HCT116 (cell line): ENCODE measurements at regions of chr11 and their contacts with region 1.

Region 1: GRCh38 chr11:73931039-73931645 is 19.7 kb upstream of the DNAJB13 start:
- DNase-seq: peak; percentile 79
- ATAC-seq: peak; percentile 100
- H3K4me3 ChIP-seq: no peak overlapping the region
- H3K27ac ChIP-seq: no peak overlapping the region
- H3K4me1 ChIP-seq: peaks cover 3% of the 10 kb centered on the region in 2 experiments; a peak in 3 of 4 replicates
- H3K27me3 ChIP-seq: no peaks in the 10 kb centered on the region
- CTCF ChIP-seq: peak; percentile 49 to 74 (median 60); a peak in 5 of 6 replicates
- POLR2A ChIP-seq: no peak
- RAD21 ChIP-seq: peak; percentile 93

Region 2: DNA sequence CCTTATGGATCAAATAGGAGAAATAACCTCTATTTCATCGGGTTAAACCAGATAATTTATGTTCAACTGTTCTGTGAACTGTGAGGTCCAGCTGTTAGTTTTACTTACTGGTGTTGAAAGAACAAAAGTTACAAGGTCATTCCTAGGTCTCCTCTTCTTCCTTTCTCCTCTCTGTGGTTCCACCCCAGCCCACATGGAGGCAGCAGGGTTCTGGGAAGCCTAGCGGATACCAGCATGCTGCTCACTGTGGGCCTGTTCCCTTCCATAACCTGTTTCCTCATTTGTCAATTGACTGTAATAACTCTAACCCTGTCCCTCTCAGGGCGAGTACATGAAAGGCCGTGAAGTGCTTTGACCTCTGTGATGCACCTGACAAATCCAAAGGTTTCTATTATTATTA is 527.1 kb before region 1 on chr11:
- CTCF ChIA-PET with region 1: interaction called, 6 read pairs
- POLR2A ChIA-PET with region 1: no interaction called
- RAD21 ChIA-PET with region 1: no interaction called
- intact Hi-C with region 1: loop called (anchors 2 kb)
- DNase-seq: peak; percentile 28
- ATAC-seq: peak; percentile 85
- H3K4me3 ChIP-seq: no peak overlapping the region
- H3K27ac ChIP-seq: no peak overlapping the region
- H3K4me1 ChIP-seq: no peaks in the 10 kb centered on the region
- H3K27me3 ChIP-seq: no peaks in the 10 kb centered on the region
- CTCF ChIP-seq: peak; percentile 63 to 76 (median 70)
- POLR2A ChIP-seq: no peak
- RAD21 ChIP-seq: peak; percentile 78

Region 3: GRCh38 chr11:73625696-73626318 is 305.3 kb before region 1 on chr11:
- CTCF ChIA-PET with region 1: interaction called, 49 read pairs
- POLR2A ChIA-PET with region 1: no interaction called
- RAD21 ChIA-PET with region 1: interaction called, 7 to 8 read pairs
- intact Hi-C with region 1: loop called (anchors 1 kb)
- DNase-seq: peak; percentile 56
- ATAC-seq: peak; percentile 96
- H3K4me3 ChIP-seq: no peak overlapping the region
- H3K27ac ChIP-seq: no peak overlapping the region
- H3K4me1 ChIP-seq: peaks cover 0 to 4% of the 10 kb centered on the region in 2 experiments; a peak in 1 of 4 replicates
- H3K27me3 ChIP-seq: peaks cover 9% of the 10 kb centered on the region; the same call in 1 of the 2 replicates
- CTCF ChIP-seq: peak; percentile 79 to 95 (median 93)
- POLR2A ChIP-seq: no peak
- RAD21 ChIP-seq: peak; percentile 92

Region 4: DNA sequence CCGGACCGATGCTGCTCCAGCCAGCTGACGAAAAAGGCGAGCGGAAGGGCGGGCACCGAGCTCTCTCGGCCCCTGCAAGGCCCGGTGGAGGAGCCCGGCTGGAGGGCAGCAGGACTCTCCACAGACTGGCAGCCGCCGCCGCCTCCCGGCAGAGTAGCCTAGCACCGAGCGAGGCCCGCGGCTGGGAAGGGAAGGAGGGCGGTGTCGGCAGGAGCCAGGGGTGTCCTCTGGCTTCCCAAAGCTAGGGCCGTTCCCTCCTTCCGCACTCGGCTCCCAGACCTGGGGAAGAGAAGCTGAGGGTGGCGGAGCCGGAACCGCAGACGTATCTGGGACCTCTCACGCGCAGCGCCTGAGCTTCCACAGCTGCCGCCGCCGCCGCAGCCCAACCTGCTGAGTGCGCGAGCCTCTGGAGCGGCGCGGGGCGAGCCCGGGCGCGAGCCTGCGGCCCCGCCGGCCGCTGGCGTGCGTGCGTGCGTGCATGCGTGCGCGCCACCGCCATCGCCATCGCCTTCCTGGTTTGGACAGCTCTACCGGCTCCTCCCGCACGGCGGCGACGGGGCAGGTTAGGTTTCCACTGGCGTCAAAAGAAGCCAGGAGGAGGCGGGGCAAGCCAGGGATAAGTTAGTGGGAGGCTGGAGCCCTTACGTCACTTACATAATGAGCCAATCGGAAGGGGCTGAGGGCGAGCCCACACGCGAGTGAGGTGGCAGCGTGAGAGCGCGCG is 170.3 kb before region 1 on chr11 and contains the start of gene RAB6A:
- CTCF ChIA-PET with region 1: interaction called, 7 read pairs
- POLR2A ChIA-PET with region 1: no interaction called
- RAD21 ChIA-PET with region 1: interaction called in 1 of 2 experiments, 3 read pairs
- intact Hi-C with region 1: loop called (anchors 1 kb)
- DNase-seq: peak; percentile 99
- ATAC-seq: peak; percentile 90
- H3K4me3 ChIP-seq: peak within 1 kb of the TSS; percentile 86 to 94
- H3K27ac ChIP-seq: peak within 1 kb of the TSS; percentile 92
- H3K4me1 ChIP-seq: peaks cover 10 to 21% of the 10 kb centered on the region in 2 experiments; a peak in 3 of 4 replicates
- H3K27me3 ChIP-seq: no peaks in the 10 kb centered on the region
- CTCF ChIP-seq: peak in 1 of 3 experiments; percentile 34; a peak in 2 of 6 replicates
- POLR2A ChIP-seq: peak; percentile 82
- RAD21 ChIP-seq: no peak; the same call in 1 of the 2 replicates
- total RNA-seq, gene RAB6A: 121 TPM

Region 5: GRCh38 chr11:73893041-73893440 is 38.1 kb before region 1 on chr11:
- CTCF ChIA-PET with region 1: no interaction called
- POLR2A ChIA-PET with region 1: no interaction called
- RAD21 ChIA-PET with region 1: no interaction called
- intact Hi-C with region 1: no loop called
- DNase-seq: no peak
- ATAC-seq: no peak
- H3K4me3 ChIP-seq: no peak overlapping the region
- H3K27ac ChIP-seq: no peak overlapping the region
- H3K4me1 ChIP-seq: no peaks in the 10 kb centered on the region
- H3K27me3 ChIP-seq: no peaks in the 10 kb centered on the region
- CTCF ChIP-seq: no peak
- POLR2A ChIP-seq: no peak
- RAD21 ChIP-seq: no peak